ENCODE measurements at regions of chr20 and their contacts with region 1.

Region 1: DNA sequence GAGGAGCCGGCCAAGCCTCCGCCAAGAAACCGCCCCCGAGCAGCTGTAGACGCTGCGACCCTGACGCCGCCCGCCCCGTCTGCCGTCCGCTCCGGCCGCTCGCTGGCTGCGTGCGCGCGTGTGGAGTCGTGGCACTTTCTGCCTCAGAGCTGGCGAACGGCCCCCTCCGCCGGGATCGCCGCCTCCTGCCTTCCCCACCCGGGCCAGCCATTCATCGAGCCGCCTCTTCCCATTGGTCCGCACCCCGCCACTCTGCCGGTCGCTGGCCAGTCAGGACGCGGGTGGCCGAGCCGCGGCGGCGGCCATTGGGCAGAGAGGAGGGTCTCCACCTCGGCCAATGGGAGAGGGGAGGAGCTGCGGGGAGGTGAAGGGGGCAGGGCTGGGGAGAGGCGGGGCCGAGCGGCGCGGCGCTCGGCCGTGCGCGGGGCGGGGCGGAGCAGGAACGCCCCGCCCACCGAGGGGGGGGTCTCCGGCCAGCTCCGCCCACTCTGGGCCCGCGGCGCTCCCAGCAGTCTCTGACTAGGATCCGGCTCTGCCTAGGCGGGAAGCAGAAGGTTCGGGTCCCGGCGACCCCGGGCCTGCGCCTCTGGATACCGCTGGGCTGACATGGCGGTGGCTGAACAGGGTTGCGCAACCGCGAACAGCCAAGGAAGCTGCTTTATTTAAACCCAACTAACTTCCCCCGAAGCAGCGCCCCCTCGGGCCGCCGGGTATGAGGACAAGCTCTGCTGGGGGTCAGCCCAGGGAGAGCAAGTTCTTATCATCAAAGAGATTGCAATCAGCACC is at the start of gene RRBP1:
- DNase-seq: peak; percentile 99
- ATAC-seq: peak; percentile 97 to 99 (median 98)
- H3K4me3 ChIP-seq: peak within 1 kb of the TSS; percentile 64 to 95 (median 85)
- H3K27ac ChIP-seq: peak within 1 kb of the TSS; percentile 81 to 95 (median 92)
- H3K4me1 ChIP-seq: peaks cover 0 to 36% (median 17%) of the 10 kb centered on the region in 12 donors
- H3K27me3 ChIP-seq: no peaks in the 10 kb centered on the region
- CTCF ChIP-seq: peak; percentile 43 to 80 (median 68)
- POLR2A ChIP-seq: peak in 1 of 2 donors; percentile 95
- total RNA-seq, gene RRBP1: 27.9 to 91.3 (median 40.0) TPM

Region 2: DNA sequence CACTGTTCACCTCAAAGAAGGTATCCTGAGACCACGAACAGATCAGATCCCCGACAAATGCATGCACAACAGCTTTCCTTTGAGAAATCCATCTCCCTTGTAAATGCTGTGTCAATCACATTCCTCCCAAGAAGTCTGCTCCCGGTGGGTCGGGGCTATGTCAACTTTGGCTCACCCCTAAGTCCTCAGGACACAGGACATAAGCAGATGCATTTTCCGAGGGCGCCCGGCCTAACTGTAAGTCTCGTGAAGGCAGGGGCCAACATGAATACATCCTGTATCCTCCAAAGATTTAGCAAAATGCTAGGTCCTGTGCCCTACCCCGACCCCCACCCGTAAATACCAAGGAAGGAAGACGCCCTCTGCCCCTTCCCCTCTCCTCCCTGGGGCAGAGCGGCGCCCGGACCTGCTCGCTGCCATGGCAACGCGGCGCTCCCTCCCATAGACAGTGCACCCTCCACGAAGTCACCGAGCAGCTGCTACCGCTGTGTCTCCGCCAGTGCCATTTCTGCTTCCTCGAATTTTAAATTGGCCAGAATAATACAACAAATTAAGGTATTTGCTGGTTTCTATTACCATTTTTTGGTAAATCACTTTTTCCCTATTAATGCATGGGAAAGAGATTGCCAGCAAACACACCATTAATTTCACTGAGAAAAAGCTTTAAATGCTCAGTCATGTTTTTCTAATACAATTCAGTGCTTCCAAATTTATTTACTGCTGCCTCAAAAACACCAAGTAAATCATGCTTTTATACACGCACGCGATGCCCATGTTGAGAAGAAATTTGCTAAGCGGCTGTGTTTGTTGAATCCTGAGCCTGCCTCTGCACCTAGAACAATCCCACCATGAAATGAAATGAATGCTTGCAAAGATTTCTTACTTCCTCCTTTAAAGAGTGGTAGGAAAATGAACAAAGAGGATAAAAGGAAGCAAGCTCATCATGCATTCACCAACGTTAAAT is 354.8 kb before region 1 on chr20:
- intact Hi-C with region 1: no loop called
- DNase-seq: no peak
- ATAC-seq: no peak
- H3K4me3 ChIP-seq: no peak overlapping the region
- H3K27ac ChIP-seq: no peak overlapping the region
- H3K4me1 ChIP-seq: no peaks in the 10 kb centered on the region
- H3K27me3 ChIP-seq: peaks cover 0 to 34% (median 10%) of the 10 kb centered on the region in 9 donors
- CTCF ChIP-seq: no peak
- POLR2A ChIP-seq: no peak

Region 3: DNA sequence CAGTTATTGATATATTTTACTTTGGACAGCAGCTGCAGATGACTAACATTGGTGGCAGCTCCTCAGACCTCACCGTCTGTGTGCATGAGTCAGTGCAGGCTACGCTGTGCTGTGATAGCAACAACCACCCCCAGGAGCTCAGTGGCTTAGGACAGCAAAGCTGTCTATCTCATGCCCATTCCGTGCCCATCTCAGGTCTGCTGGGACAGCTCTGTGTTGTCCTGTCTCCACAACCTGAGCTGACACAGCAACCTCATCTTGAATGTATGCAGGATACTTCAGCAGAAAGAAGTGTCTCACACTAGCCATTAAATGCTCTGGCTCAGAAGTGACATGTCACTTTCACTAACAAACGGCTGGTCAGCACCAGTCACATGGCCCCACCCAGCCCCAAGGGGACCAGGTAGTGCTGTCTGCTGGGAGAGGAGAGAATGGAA is 65.2 kb after region 1 on chr20:
- intact Hi-C with region 1: loop called in 2 of 10 experiments (anchors 2 to 10 kb)
- DNase-seq: peak in 1 of 5 donors; percentile 64
- ATAC-seq: peak in 3 of 4 donors; percentile 23 to 84 (median 73)
- H3K4me3 ChIP-seq: no peak overlapping the region
- H3K27ac ChIP-seq: no peak overlapping the region
- H3K4me1 ChIP-seq: peaks cover 0 to 19% (median 10%) of the 10 kb centered on the region in 12 donors
- H3K27me3 ChIP-seq: no peaks in the 10 kb centered on the region
- CTCF ChIP-seq: no peak
- POLR2A ChIP-seq: no peak

Region 4: DNA sequence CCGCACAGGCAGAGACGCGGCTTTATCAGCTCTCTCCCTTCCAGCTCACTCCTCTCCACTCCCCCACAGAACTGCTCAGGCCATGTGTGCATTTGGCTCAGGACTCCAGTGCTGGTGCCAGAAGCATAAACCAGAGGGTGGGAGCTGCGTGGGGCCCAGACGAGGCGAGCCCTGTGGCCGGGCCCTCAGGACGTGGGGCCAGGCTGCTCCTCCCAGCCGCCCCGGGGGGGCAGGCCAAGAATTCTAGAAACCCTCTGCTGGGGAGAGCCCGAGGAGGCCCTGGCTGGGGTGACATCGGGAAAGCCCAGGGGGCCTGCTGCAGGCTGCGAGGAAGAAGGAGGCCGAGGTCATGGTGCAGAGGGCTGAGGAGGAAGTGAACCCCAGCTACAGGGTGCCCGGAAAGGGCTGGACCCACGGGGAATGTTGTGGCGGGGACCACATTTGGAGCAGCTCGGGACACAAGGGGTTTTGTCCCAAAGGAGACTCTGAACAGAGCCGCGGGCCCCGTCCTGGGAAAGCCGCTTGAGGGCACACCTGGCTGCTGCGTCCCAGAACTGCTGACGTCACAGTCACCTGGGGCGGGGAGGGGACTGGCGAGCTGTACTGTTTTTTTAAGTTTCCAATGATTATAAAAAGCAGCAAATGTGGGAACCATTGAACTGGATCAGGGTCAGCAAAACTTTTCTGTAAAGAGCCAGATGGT is 124.6 kb after region 1 on chr20:
- intact Hi-C with region 1: loop called in 6 of 10 experiments (anchors 2 to 10 kb)
- DNase-seq: peak; percentile 85 to 90 (median 89)
- ATAC-seq: peak; percentile 88 to 94 (median 93)
- H3K4me3 ChIP-seq: peak overlapping the region in 6 of 12 donors; percentile 4 to 29 (median 17)
- H3K27ac ChIP-seq: peak overlapping the region; percentile 11 to 84 (median 76)
- H3K4me1 ChIP-seq: peaks cover 5 to 47% (median 37%) of the 10 kb centered on the region in 12 donors
- H3K27me3 ChIP-seq: no peaks in the 10 kb centered on the region
- CTCF ChIP-seq: peak in 1 of 12 donors; percentile 11
- POLR2A ChIP-seq: no peak

Region 5: GRCh38 chr20:17843246-17844132 is 161.2 kb after region 1 on chr20:
- intact Hi-C with region 1: loop called in 1 of 10 experiments (anchors 5 kb)
- DNase-seq: peak; percentile 60 to 73 (median 71)
- ATAC-seq: peak in 3 of 4 donors; percentile 67 to 85 (median 77)
- H3K4me3 ChIP-seq: no peak overlapping the region
- H3K27ac ChIP-seq: peak overlapping the region in 11 of 12 donors; percentile 44 to 87 (median 72)
- H3K4me1 ChIP-seq: peaks cover 4 to 51% (median 25%) of the 10 kb centered on the region in 12 donors
- H3K27me3 ChIP-seq: no peaks in the 10 kb centered on the region
- CTCF ChIP-seq: no peak
- POLR2A ChIP-seq: no peak

Region 6: DNA sequence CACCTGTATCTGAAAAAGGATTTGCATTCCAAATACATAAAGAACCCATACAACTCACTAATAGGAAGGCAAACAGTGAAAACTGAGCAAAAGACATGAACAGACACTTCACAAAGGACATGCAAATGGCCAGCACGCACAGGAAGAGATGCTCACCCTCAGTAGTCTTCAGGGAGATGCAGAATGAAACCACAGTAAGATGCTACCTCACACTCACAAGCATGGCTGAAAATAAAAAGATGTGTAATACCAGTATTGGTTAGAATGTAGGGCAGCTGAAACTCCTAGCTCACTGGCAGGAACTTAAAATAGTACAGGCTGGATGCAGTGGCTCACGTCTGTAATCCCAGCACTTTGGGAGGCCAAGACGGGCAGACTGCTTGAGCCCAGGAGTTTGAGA is 221.7 kb after region 1 on chr20:
- intact Hi-C with region 1: loop called in 7 of 10 experiments (anchors 2 to 5 kb)
- DNase-seq: no peak
- ATAC-seq: no peak
- H3K4me3 ChIP-seq: no peak overlapping the region
- H3K27ac ChIP-seq: no peak overlapping the region
- H3K4me1 ChIP-seq: no peaks in the 10 kb centered on the region
- H3K27me3 ChIP-seq: no peaks in the 10 kb centered on the region
- CTCF ChIP-seq: no peak
- POLR2A ChIP-seq: no peak

Region 7: DNA sequence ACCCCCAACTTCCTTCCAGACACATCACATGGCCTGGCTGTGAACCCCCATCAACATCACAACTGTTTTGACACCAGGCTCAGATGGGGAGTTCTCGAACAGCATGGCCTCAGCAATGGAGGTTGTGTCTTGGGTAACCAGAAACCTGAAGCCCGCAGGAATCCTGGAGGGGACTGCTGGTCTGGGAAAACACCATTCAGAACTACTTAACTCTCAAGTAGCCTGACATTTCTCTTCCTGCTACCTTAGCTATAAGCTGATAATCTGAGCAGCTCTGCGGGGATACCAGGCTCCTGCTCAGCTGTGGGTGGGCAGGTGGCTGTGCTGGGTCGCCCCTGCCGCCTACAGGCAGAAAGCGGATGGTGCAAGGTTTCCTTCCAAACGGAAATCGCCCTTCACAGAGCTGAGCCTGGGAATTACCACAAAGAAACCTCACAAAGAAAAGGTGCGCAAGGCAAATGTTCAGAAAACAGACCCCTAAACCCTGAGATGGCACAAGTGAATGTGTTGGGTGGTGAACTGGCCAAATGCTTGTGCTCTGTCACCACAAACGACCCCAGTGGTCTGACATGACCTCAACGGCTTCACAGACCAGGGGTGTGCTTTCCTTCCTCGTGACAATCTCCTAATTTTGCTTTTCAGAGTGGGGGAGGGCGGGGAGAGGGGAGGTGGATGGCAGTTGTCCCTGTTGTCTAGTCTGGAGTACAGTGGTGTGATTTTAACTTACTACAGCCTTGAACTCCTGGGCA is 256.7 kb after region 1 on chr20:
- intact Hi-C with region 1: loop called in 2 of 10 experiments (anchors 1 to 5 kb)
- DNase-seq: peak in 4 of 5 donors; percentile 53 to 69 (median 66)
- ATAC-seq: peak; percentile 47 to 83 (median 78)
- H3K4me3 ChIP-seq: no peak overlapping the region
- H3K27ac ChIP-seq: peak overlapping the region in 2 of 12 donors; percentile 37 to 38
- H3K4me1 ChIP-seq: peaks cover 0 to 57% (median 24%) of the 10 kb centered on the region in 12 donors
- H3K27me3 ChIP-seq: no peaks in the 10 kb centered on the region
- CTCF ChIP-seq: peak; percentile 80 to 91 (median 88)
- POLR2A ChIP-seq: no peak

Region 8: DNA sequence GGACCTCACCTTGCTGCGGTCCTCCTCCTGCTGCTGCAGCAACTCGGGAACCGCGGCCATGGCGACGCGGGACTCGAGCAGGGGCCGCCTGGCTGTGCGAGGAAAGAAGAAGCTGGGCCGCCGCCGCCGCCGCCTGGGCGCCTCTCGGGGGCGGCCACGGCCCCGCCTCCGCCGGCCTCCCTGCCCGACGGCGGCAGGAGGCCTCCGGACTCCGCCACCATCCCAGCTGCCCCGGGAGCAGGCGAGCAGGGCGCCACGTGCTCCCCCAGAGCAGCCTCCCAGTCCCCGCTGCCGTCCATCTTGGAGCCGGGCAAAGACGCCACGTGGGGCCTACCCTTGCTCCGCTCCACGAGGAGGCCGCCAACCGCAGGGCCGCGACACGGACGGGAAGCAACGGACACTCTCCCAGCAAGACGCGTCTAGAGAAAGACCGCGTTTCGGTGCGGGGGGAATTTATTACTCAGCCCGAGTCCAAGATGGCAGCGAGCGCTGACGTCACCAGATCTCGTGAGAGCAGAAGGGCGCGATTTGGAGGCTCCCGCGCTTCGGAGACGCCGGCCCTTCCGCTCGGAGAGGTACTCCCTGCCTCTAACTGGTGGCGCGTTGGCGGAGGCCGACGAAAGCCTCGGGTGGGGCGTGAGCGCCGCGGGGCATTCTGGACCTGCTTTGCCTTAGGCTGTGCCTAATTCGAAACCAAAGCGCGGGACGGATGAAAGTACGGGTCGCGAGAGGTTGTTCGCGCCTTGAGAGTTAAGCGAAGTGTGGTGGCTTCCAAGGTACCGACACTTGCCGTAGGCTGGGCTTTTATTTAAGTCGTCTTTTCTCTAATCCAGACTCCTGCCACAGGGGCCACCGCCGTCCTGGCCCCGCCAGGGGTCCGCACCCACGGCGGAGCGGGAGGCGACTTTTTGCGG is 286.3 kb after region 1 on chr20 and contains the starts of genes MGME1 and SNX5:
- intact Hi-C with region 1: loop called in 1 of 10 experiments (anchors 2 kb)
- DNase-seq: peak; percentile 99 to 100 (median 100)
- ATAC-seq: peak; percentile 97 to 99 (median 98)
- H3K4me3 ChIP-seq: peak within 1 kb of the TSS; percentile 54 to 97 (median 91)
- H3K27ac ChIP-seq: peak within 1 kb of the TSS; percentile 85 to 100 (median 96)
- H3K4me1 ChIP-seq: peaks cover 2 to 80% (median 67%) of the 10 kb centered on the region in 12 donors
- H3K27me3 ChIP-seq: no peaks in the 10 kb centered on the region
- CTCF ChIP-seq: peak in 3 of 12 donors; percentile 5 to 16 (median 6)
- POLR2A ChIP-seq: peak in 1 of 2 donors; percentile 54
- total RNA-seq, gene MGME1: 8.6 to 22.0 (median 11.8) TPM
- total RNA-seq, gene SNX5: 36.6 to 75.0 (median 45.9) TPM